AG04450 (cell line): ENCODE measurements at regions of chr2 and their contacts with region 1.

Region 1: GRCh38 chr2:217899231-217900009 is 103.4 kb downstream of the TNS1 start:
- DNase-seq: peak; percentile 59
- H3K4me3 ChIP-seq: 0 out of 2 replicates have a peak overlapping the region, but pooled peaks have one; percentile 12
- H3K27ac ChIP-seq: peak overlapping the region; percentile 61
- H3K27me3 ChIP-seq: no peaks in the 10 kb centered on the region
- CTCF ChIP-seq: peak; percentile 81

Region 2: GRCh38 chr2:217972490-217972889 is 73.1 kb after region 1 on chr2:
- CTCF ChIA-PET with region 1: interaction called, 10 read pairs
- POLR2A ChIA-PET with region 1: no interaction called
- DNase-seq: no peak
- H3K4me3 ChIP-seq: no peak overlapping the region
- H3K27ac ChIP-seq: no peak overlapping the region
- H3K27me3 ChIP-seq: no peaks in the 10 kb centered on the region
- CTCF ChIP-seq: no peak

Region 3: GRCh38 chr2:217993817-217994463 is 94.5 kb after region 1 on chr2:
- CTCF ChIA-PET with region 1: interaction called, 10 read pairs
- POLR2A ChIA-PET with region 1: no interaction called
- DNase-seq: no peak
- H3K4me3 ChIP-seq: no peak overlapping the region
- H3K27ac ChIP-seq: peak overlapping the region; percentile 88
- H3K27me3 ChIP-seq: no peaks in the 10 kb centered on the region
- CTCF ChIP-seq: peak; percentile 77